H1 (cell line): ENCODE measurements at regions of chr10 and their contacts with region 1.

Region 1: DNA sequence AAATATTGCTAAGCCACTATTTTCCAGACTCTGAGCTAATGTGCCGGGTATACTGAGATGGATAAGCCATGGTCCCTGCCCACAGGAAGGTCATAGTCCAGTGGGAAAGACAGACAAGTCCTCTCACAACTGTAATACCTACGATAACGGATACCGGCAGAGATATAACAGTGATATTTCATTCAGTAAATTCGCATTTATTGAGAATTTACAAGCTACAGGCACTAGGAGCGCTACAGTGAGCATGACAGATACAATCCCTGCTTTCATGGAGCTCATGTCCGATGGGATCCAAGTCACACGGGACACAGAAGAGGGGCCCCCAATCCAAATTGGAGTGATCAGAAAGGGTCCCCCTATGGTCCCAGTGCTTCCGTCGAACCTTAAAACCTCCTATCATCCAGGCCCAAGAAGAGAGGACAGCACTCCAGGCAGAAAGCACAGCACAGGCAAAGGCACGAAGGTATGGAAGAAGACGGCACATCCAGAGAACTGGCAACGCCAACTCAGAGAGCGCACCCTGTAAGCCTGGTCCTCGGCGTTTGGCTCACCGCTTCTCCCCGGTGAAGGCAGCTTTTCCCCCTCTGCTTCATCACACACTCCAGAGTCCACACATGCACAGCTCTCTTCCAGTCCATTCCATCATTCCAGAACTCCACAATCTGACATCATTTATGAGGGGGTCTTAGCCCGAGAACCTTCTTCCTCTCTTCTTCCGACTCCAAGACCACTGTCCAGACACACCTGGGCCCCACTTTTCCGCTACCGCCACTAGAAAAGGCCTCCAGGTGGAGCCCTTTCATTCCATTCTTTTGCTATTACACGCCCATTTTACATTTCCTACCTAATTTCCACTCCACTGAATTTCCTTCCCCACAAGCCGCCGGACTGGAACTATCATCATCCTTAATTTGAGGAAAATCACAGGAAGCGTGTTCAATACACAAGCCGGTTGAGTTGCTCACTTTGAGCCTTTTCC is 47.9 kb upstream of the NKX2-3 start:
- DNase-seq: peak in 1 of 2 experiments; percentile 68
- H3K4me3 ChIP-seq: no peak overlapping the region
- H3K27ac ChIP-seq: no peak overlapping the region
- H3K4me1 ChIP-seq: no peaks in the 10 kb centered on the region
- H3K27me3 ChIP-seq: peaks cover 0 to 5% (median 0%) of the 10 kb centered on the region in 4 experiments; a peak in 2 of 7 replicates
- CTCF ChIP-seq: peak; percentile 47 to 69 (median 53); a peak in 3 of 4 replicates
- EP300 ChIP-seq: no peak
- POLR2A ChIP-seq: no peak
- RAD21 ChIP-seq: peak; percentile 65 to 71

Region 2: DNA sequence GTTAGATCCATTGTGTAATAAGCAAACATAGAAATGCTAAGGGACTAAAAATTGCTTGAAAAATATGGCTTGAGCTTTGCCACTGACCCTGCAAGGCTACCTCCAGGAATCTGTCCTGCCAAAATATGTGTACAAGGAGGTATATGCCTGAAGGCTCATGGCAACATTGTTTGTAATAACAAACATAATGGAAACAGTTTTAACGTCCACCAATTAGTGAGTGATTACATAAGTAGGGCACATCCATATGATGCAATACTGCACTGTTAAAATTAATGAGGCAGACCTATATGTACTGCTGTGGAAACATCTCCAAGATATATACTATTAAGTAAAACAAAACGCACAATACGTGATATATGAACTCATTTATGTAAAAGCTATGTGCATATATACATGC is 41.4 kb before region 1 on chr10:
- CTCF ChIA-PET with region 1: interaction called, 26 read pairs
- POLR2A ChIA-PET with region 1: no interaction called
- DNase-seq: no peak
- H3K4me3 ChIP-seq: no peak overlapping the region
- H3K27ac ChIP-seq: no peak overlapping the region
- H3K4me1 ChIP-seq: 0 out of 7 replicates have a peak, but pooled peaks cover 0 to 2% (median under 1%) of the 10 kb centered on the region in 4 experiments
- H3K27me3 ChIP-seq: no peaks in the 10 kb centered on the region
- CTCF ChIP-seq: no peak
- EP300 ChIP-seq: no peak
- POLR2A ChIP-seq: no peak
- RAD21 ChIP-seq: no peak

Region 3: GRCh38 chr10:99497343-99498025 is 12.6 kb after region 1 on chr10:
- CTCF ChIA-PET with region 1: interaction called, 58 read pairs
- POLR2A ChIA-PET with region 1: interaction called, 3 read pairs
- DNase-seq: no peak
- H3K4me3 ChIP-seq: no peak overlapping the region
- H3K27ac ChIP-seq: no peak overlapping the region
- H3K4me1 ChIP-seq: no peaks in the 10 kb centered on the region
- H3K27me3 ChIP-seq: peaks cover 0 to 2% (median 0%) of the 10 kb centered on the region in 4 experiments; a peak in 1 of 7 replicates
- CTCF ChIP-seq: no peak
- EP300 ChIP-seq: no peak
- POLR2A ChIP-seq: no peak
- RAD21 ChIP-seq: no peak

Region 4: GRCh38 chr10:99560277-99561126 is 75.6 kb after region 1 on chr10:
- CTCF ChIA-PET with region 1: interaction called, 37 read pairs
- POLR2A ChIA-PET with region 1: no interaction called
- DNase-seq: peak in 1 of 2 experiments; percentile 83
- H3K4me3 ChIP-seq: no peak overlapping the region
- H3K27ac ChIP-seq: no peak overlapping the region
- H3K4me1 ChIP-seq: peaks cover 0 to 2% (median 0%) of the 10 kb centered on the region in 4 experiments; a peak in 2 of 7 replicates
- H3K27me3 ChIP-seq: peaks cover 0 to under 1% (median 0%) of the 10 kb centered on the region in 4 experiments; a peak in 2 of 7 replicates
- CTCF ChIP-seq: peak in 2 of 3 experiments; percentile 78 to 80; a peak in 3 of 4 replicates
- EP300 ChIP-seq: no peak
- POLR2A ChIP-seq: no peak
- RAD21 ChIP-seq: peak; percentile 88 to 91

Region 5: DNA sequence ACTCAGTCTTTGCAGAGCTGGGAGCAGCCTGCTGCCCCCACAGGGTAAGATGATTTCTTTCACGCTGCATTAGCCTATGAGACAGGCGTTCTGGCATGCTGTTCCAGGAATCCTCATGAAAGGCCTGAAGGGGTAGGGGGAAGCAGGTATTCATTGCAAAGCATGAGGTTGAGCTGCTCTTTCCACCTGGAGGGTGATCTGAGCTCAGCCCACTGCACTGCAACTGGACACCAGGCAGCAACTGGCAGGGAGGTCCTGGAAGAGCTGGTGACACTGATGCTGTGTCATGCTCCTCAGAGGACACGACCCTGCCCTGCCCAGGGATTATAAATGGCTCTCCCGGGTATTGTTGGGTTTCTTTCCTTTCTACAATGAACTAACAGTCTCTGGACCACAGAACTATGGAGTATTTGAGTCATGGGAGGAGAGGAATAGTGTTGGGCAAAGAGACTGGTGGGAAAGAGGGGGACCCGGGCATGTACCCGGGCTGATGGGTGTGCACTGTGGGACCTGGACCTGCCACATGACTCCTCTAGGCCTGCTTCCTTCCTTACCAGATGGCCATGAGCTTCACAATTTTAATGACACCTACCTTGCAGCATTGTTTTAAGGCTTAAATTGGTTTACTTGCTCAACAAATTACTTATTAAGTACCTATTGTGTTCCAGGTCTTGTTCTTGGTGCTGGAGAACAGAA is 111.0 kb after region 1 on chr10:
- CTCF ChIA-PET with region 1: interaction called, 10 read pairs
- POLR2A ChIA-PET with region 1: no interaction called
- DNase-seq: peak; percentile 13 to 47
- H3K4me3 ChIP-seq: no peak overlapping the region
- H3K27ac ChIP-seq: no peak overlapping the region
- H3K4me1 ChIP-seq: peaks cover 0 to 7% (median 4%) of the 10 kb centered on the region in 4 experiments; a peak in 4 of 7 replicates
- H3K27me3 ChIP-seq: peaks cover 0 to 4% (median 1%) of the 10 kb centered on the region in 4 experiments; a peak in 1 of 7 replicates
- CTCF ChIP-seq: no peak
- EP300 ChIP-seq: no peak
- POLR2A ChIP-seq: no peak
- RAD21 ChIP-seq: 0 out of 4 replicates have a peak, but pooled peaks of 1 of the 2 experiments have one; percentile 1